ENCODE measurements at regions of chr21 and their contacts with region 1.

Region 1: DNA sequence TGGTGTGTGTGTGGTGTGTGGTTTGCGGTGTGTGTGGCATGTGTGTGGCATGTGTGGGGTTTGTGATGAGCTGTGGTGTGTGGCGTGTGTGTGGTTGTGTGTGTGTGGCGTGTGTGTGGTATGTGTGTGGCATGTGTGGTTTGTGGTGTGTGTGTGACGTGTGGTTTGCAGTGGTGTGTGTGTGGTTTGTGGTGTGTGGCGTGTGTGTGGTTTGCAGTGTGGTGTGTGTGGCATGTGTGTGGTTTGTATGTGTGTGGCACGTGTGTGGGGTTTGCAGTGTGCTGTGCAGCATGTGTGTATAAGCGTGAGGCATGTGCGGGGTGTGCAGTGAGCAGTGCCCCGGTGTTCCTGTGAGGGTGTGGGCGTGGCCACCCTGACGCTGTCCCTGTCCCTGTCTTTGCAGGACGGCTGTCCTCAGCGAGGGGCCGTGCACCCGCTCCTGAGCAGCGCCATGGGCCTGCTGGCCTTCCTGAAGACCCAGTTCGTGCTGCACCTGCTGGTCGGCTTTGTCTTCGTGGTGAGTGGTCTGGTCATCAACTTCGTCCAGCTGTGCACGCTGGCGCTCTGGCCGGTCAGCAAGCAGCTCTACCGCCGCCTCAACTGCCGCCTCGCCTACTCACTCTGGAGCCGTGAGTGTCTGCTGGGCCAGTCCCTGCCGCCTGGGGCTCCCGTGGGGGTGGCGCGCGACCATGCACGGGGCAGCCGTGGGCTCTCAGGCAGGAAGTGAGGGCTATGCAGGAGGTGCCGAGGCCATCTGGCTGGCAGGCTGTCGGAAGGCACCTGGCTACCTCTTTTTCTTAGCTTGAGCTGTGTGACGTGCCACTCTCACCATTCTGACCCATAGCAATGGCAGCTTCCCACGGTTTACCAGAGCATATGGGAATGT is 52.6 kb upstream of the TRAPPC10 start:
- DNase-seq: no peak
- H3K4me3 ChIP-seq: no peak overlapping the region
- H3K27ac ChIP-seq: no peak overlapping the region
- H3K27me3 ChIP-seq: no peaks in the 10 kb centered on the region
- CTCF ChIP-seq: no peak

Region 2: DNA sequence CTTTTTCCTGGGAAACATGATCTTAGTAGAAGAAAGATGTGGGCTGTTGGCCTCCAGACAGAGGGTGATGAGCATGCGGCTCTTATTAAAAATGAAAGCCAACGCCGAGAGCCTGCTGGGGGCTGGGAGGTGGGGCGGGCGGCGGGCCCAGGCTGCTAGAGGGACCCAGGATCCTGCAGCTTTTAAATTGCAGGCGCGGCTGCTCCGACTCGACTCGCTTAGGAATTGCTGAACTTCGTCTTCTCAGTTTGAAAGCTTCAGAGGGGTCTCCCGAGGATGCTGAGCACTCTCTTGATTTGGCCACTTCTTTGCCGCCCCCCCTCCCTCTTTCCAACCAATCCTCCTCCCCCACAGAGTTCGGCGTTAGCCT is 93.2 kb before region 1 on chr21:
- intact Hi-C with region 1: loop called in 1 of 2 experiments (anchors 5 kb)
- DNase-seq: peak in 7 of 10 donors; percentile 23 to 46 (median 41)
- H3K4me3 ChIP-seq: peak overlapping the region; percentile 54 to 89 (median 80)
- H3K27ac ChIP-seq: peak overlapping the region in 50 of 59 donors; percentile 2 to 93 (median 76)
- H3K27me3 ChIP-seq: no peaks in the 10 kb centered on the region
- CTCF ChIP-seq: no peak

Region 3: DNA sequence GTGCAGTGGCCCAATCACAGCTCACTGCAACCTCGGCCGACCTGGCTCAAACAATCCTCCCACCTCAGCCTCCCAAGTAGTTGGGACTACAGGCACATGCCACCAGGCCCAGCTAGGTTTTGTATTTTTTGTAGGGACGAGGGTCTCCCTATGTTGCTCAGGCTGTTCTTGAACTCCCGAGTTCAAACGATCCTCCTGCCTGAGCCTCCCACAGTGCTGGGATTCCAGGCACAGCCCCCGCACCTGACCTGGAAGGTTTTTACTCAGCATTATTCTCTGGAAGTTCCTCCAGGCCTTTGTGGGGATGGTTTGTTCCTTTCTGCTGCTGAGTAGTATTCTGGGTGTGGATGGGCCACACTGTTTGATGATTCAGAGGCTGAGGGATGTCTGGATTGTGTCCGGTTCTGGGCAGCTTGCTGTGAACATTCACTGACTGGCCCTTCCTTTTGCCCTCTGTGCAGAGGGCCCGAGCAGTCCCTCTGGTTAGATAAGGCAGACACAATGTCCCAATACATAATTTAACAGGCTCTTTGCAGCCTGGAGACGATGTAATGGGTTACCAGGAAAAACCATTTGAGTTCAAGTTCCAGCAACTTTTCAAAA is 46.6 kb after region 1 on chr21:
- intact Hi-C with region 1: no loop called
- DNase-seq: no peak
- H3K4me3 ChIP-seq: no peak overlapping the region
- H3K27ac ChIP-seq: peak overlapping the region in 55 of 59 donors; percentile 23 to 99 (median 74)
- H3K27me3 ChIP-seq: no peaks in the 10 kb centered on the region
- CTCF ChIP-seq: no peak

Measured in dorsolateral prefrontal cortex (tissue), 120 donors.